Activated naive CD4-positive, alpha-beta T cell treated with anti-CD3 and anti-CD28 coated beads, Interleukin-2, amount 10 ng/mL, durations not matched to agents 7 days and 5 days (primary cell): ENCODE measurements at regions of chr9 and their contacts with region 1.

Region 1: DNA sequence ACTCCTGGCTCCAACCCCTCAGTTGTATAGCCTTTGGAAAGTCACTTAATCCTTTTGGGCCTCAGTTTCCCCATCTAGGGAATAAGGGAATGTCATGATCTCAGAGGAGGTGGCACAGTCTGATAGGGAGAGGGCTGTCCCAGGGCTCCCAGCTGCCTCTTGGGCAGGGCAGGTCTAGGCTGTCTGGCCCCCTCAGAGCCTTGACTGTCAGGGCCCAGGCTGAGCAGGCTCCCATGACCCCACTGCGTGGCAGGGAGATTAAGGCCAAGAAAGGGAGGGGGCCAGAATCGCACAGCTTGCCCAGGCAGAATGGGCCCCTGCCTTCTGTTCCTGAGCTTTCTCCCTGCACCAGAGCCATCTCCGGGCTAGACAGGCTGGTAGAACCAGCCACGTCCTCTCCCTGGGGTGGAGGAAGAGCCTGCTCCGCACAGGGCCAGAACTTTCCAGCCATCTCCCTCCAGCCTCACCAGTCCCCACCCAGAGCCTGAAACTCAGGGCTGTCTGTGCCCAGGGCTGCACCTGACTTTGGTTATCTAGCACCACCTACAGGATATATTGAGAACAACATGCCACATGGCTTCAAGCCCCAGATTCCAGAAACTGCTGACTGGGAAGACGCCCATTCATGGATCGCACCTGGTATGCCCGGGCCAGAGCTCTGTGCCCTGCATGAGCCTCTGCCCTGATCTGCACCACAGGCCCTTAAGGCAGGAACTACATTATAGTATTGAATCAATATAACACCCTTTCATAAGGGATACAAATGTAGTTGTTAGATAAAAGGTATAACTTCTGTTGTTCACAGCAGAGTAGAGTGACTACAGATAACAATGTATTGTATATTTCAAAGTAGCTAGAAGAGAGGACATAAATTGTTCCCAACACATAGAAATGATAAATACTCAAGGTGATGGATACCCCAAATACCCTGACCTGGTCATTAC is 32.0 kb downstream of the NAIF1 start:
- DNase-seq: peak; percentile 78
- H3K4me3 Mint-ChIP-seq: no peak overlapping the region
- H3K27ac Mint-ChIP-seq: peak overlapping the region; percentile 63
- H3K4me1 Mint-ChIP-seq: peaks cover 47% of the 10 kb centered on the region
- H3K27me3 Mint-ChIP-seq: peaks cover 7% of the 10 kb centered on the region

Region 2: DNA sequence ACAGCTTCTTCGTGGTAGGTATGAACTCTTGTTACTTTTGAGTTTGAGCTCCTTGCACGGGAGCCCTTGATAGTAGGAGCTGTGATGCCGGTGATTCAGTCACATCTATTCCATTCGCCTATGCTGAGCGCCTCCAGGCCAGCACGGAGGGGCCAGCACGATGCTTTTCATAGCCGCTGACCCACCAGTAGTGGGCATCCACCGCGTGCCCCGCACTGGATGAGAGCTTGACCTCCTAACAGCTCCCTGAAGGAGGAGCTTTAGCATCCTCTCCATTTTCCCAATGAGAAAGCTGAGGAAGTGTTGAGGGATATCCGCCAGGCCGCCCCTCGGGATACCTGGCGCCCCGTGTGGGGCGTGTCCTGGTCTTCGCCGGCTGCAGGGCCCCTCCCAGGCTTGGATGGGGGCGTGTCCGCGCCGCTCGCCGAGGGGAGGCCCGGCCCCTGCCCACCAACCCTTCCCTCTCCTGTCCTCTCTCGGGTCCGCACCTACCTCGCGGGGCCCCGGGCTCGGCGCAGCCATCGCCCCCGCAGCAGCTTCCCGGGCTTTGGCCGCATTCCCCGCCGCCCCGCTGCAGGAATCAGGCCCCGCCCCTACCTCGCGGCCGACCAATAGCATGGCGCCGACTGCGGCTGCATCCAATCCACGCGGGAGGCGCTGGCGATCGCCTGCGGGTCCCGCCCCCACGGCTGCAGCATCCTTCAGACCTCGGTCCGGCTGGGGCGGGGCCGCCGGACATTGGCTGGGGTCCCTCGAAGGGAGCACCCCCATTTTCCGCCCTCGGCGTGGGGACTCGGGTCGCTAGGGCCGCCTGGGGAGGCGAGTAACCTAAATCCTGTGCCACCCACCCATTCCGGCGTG is 104.6 kb before region 1 on chr9 and contains the start of gene PIP5KL1:
- CTCF ChIA-PET with region 1: interaction called, 34 read pairs
- DNase-seq: peak; percentile 85
- H3K4me3 Mint-ChIP-seq: peak within 1 kb of the TSS; percentile 57
- H3K27ac Mint-ChIP-seq: peak within 1 kb of the TSS; percentile 50
- H3K4me1 Mint-ChIP-seq: peaks cover 50% of the 10 kb centered on the region
- H3K27me3 Mint-ChIP-seq: peaks cover 63% of the 10 kb centered on the region

Region 3: DNA sequence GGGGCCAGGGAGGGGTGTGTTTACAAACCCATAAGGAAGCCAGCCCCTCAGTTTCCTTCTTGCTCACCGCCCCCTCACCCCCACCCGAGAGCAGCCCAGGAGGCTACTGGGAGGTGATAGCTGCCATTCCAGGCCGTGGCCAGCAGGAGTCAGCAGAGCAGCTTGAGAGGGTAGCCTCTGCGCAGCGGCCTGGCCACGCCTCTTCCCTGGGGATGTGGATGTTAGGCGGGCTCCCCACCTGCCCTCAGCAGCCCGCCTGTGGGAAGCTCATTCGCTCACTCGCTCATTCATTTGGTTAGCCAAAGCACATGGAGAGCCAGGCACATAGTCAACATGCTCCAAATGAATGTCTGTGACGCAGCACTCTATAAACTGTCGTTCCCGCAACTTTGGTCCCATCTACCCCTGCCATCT is 91.4 kb before region 1 on chr9:
- CTCF ChIA-PET with region 1: interaction called, 247 read pairs
- DNase-seq: peak; percentile 87
- H3K4me3 Mint-ChIP-seq: no peak overlapping the region
- H3K27ac Mint-ChIP-seq: peak overlapping the region; percentile 86
- H3K4me1 Mint-ChIP-seq: peaks cover 47% of the 10 kb centered on the region
- H3K27me3 Mint-ChIP-seq: peaks cover 3% of the 10 kb centered on the region

Region 4: DNA sequence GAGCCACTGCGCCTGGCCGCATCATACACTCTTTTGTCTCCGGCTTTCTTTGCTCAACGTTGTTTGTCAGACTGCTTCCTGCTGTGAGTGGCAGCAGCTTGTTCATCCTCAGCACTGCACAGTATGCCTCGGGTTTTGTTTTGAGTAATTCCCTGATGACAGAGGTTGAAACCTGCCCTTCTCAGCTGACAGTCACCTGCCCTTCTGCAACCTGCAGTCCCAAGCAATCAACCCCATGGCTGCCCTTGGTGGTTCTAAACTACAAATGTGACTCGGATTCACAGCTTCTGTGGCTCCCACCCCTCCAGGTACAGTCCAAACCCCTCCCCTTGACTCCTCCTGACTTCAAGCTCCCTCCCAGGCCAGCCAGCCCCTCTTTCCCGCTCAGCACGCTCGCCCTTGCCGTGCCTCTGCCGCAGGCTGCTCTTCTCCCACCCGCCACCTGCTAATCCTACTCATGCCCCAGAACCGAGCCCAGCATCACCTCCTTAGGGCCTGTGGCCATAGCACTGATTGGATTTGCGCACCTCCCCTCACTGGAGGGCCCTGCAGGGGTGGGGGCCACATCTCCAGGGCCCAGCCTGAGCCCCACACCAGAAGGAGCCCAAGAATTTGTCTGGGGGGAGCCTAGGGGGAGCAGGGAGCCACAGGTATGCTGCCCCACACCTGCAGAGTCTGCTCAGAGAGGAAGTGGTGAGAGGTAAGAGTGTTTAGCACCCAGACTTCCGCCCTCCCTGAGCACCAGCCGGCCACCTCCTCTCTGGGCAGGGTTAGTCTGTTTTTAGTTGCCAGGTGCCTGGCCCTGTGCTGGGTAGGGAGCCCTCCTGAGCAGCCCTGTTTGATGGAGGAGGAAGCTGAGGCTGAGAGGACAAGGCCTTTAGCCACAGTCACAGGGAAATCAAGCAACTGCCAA is 64.4 kb before region 1 on chr9:
- CTCF ChIA-PET with region 1: interaction called, 78 read pairs
- DNase-seq: peak; percentile 83
- H3K4me3 Mint-ChIP-seq: peak overlapping the region; percentile 82
- H3K27ac Mint-ChIP-seq: peak overlapping the region; percentile 99
- H3K4me1 Mint-ChIP-seq: peaks cover 94% of the 10 kb centered on the region
- H3K27me3 Mint-ChIP-seq: no peaks in the 10 kb centered on the region

Region 5: GRCh38 chr9:128020692-128021091 is 14.4 kb before region 1 on chr9:
- CTCF ChIA-PET with region 1: interaction called, 25 read pairs
- DNase-seq: no peak
- H3K4me3 Mint-ChIP-seq: no peak overlapping the region
- H3K27ac Mint-ChIP-seq: no peak overlapping the region
- H3K4me1 Mint-ChIP-seq: peaks cover 63% of the 10 kb centered on the region
- H3K27me3 Mint-ChIP-seq: peaks cover 7% of the 10 kb centered on the region

Region 6: DNA sequence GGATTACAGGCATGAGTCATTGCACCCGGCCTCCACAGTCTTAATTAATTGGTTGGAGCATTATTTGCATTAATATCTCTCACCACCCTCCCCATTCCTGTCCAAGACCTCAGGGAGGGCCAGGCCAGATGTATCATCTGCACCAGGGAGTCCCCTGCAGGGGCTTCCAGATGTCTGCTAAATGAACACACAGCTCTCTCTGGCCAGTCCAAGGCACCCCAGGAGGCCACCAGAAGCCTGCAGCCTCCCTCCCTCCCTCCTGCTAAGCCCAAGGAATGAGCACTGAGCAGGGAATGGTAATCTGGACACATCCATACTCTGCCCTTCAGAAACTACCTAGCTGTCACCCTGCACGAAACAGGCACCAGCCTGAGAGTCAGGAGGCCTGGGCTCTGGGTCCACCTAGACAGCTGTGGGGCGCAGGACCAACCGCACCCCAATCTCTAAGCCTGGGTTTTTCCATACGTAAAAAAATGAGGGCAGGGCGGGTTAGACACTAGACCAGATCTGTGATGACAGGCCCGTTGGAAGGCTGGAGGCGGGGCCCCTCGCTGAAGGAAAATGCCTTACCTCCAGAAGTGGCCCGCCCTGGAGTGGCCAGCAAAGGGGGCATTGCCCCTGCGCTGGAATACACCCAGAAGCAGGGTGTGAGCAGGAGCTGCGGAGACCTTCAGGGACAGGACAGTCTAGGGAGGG is 147.9 kb after region 1 on chr9:
- CTCF ChIA-PET with region 1: no interaction called
- DNase-seq: no peak
- H3K4me3 Mint-ChIP-seq: no peak overlapping the region
- H3K27ac Mint-ChIP-seq: no peak overlapping the region
- H3K4me1 Mint-ChIP-seq: peaks cover 3% of the 10 kb centered on the region
- H3K27me3 Mint-ChIP-seq: no peaks in the 10 kb centered on the region

Region 7: DNA sequence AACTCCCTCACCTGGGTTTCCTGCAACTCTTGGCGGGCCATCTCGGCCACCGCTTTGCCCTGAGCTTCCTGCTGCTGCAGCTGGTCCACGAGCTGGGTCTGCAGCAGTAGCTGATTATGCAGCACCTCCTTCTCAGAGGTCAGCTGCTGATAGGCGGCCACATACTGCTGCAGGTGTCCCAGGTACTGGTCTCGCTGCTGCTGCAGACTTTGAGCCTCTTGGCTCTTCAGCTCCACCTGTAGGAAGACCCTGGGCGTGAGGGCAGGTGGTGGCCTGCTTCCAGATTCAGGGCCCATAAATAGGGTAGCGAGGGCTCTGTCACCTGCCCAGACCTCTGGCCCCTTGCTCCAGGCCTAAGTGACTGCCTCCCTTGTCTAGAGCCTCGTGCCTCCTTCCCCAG is 224.1 kb after region 1 on chr9:
- CTCF ChIA-PET with region 1: no interaction called
- DNase-seq: no peak
- H3K4me3 Mint-ChIP-seq: no peak overlapping the region
- H3K27ac Mint-ChIP-seq: no peak overlapping the region
- H3K4me1 Mint-ChIP-seq: no peaks in the 10 kb centered on the region
- H3K27me3 Mint-ChIP-seq: no peaks in the 10 kb centered on the region